H1 (cell line): ENCODE measurements at regions of chr1 and their contacts with region 1.

Region 1: GRCh38 chr1:67853704-67854103 is 20.4 kb upstream of the GNG12 start:
- DNase-seq: peak; percentile 85 to 95
- H3K4me3 ChIP-seq: no peak overlapping the region
- H3K27ac ChIP-seq: no peak overlapping the region
- H3K4me1 ChIP-seq: no peaks in the 10 kb centered on the region
- H3K27me3 ChIP-seq: no peaks in the 10 kb centered on the region
- CTCF ChIP-seq: peak; percentile 92 to 98 (median 95)
- EP300 ChIP-seq: no peak
- POLR2A ChIP-seq: no peak
- RAD21 ChIP-seq: peak; percentile 100

Region 2: GRCh38 chr1:67814121-67814772 is 39.5 kb before region 1 on chr1:
- CTCF ChIA-PET with region 1: no interaction called
- POLR2A ChIA-PET with region 1: no interaction called
- DNase-seq: no peak
- H3K4me3 ChIP-seq: no peak overlapping the region
- H3K27ac ChIP-seq: no peak overlapping the region
- H3K4me1 ChIP-seq: no peaks in the 10 kb centered on the region; a peak in 3 of 7 replicates
- H3K27me3 ChIP-seq: no peaks in the 10 kb centered on the region
- CTCF ChIP-seq: no peak
- EP300 ChIP-seq: no peak
- POLR2A ChIP-seq: no peak
- RAD21 ChIP-seq: no peak

Region 3: GRCh38 chr1:67838180-67838910 is 15.4 kb before region 1 on chr1:
- CTCF ChIA-PET with region 1: interaction called, 25 read pairs
- POLR2A ChIA-PET with region 1: no interaction called
- DNase-seq: no peak
- H3K4me3 ChIP-seq: no peak overlapping the region
- H3K27ac ChIP-seq: no peak overlapping the region
- H3K4me1 ChIP-seq: peaks cover 8 to 26% (median 24%) of the 10 kb centered on the region in 4 experiments; a peak in 6 of 7 replicates
- H3K27me3 ChIP-seq: peaks cover 3 to 15% (median 12%) of the 10 kb centered on the region in 4 experiments; a peak in 5 of 7 replicates
- CTCF ChIP-seq: no peak
- EP300 ChIP-seq: no peak
- POLR2A ChIP-seq: no peak
- RAD21 ChIP-seq: no peak

Region 4: DNA sequence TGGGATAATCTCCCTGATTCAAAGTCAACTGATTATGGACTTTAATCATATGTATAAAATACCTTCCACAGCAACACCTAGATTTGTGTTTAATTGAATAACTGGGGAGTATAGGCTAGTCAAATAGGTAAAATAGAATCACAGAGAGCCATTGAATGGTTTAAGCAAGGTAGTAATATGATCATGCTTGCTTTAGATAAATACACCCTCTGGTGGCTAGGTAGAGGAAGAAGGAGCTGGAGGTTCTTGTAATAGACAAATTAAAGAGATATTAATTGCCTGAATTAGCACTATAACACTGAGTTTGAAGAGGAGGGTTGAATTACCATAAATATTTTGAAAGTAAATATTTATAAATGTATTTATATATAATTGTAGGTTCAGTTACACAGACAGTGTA is 156.4 kb after region 1 on chr1:
- CTCF ChIA-PET with region 1: interaction called, 146 read pairs
- POLR2A ChIA-PET with region 1: no interaction called
- DNase-seq: no peak
- H3K4me3 ChIP-seq: no peak overlapping the region
- H3K27ac ChIP-seq: no peak overlapping the region
- H3K4me1 ChIP-seq: no peaks in the 10 kb centered on the region
- H3K27me3 ChIP-seq: no peaks in the 10 kb centered on the region
- CTCF ChIP-seq: peak in 2 of 3 experiments; percentile 24 to 36; a peak in 2 of 4 replicates
- EP300 ChIP-seq: no peak
- POLR2A ChIP-seq: no peak
- RAD21 ChIP-seq: peak; percentile 56 to 60

Region 5: GRCh38 chr1:68046885-68047658 is 193.4 kb after region 1 on chr1:
- CTCF ChIA-PET with region 1: interaction called, 10 read pairs
- POLR2A ChIA-PET with region 1: no interaction called
- DNase-seq: no peak
- H3K4me3 ChIP-seq: no peak overlapping the region
- H3K27ac ChIP-seq: no peak overlapping the region
- H3K4me1 ChIP-seq: 0 out of 7 replicates have a peak, but pooled peaks cover 0 to 2% (median 0%) of the 10 kb centered on the region in 4 experiments
- H3K27me3 ChIP-seq: peaks cover 0 to 22% (median 15%) of the 10 kb centered on the region in 4 experiments; a peak in 6 of 7 replicates
- CTCF ChIP-seq: no peak
- EP300 ChIP-seq: no peak
- POLR2A ChIP-seq: no peak
- RAD21 ChIP-seq: no peak

Region 6: GRCh38 chr1:68313735-68314134 is 460.0 kb after region 1 on chr1:
- CTCF ChIA-PET with region 1: no interaction called
- POLR2A ChIA-PET with region 1: no interaction called
- DNase-seq: no peak
- H3K4me3 ChIP-seq: no peak overlapping the region
- H3K27ac ChIP-seq: no peak overlapping the region
- H3K4me1 ChIP-seq: no peaks in the 10 kb centered on the region
- H3K27me3 ChIP-seq: no peaks in the 10 kb centered on the region; a peak in 1 of 7 replicates
- CTCF ChIP-seq: no peak
- EP300 ChIP-seq: no peak
- POLR2A ChIP-seq: no peak
- RAD21 ChIP-seq: no peak

Region 7: GRCh38 chr1:68339471-68339870 is 485.8 kb after region 1 on chr1:
- CTCF ChIA-PET with region 1: interaction called, 10 read pairs
- POLR2A ChIA-PET with region 1: no interaction called
- DNase-seq: no peak
- H3K4me3 ChIP-seq: no peak overlapping the region
- H3K27ac ChIP-seq: no peak overlapping the region
- H3K4me1 ChIP-seq: no peaks in the 10 kb centered on the region
- H3K27me3 ChIP-seq: no peaks in the 10 kb centered on the region
- CTCF ChIP-seq: no peak
- EP300 ChIP-seq: no peak
- POLR2A ChIP-seq: no peak
- RAD21 ChIP-seq: no peak